Activated naive CD4-positive, alpha-beta T cell treated with anti-CD3 and anti-CD28 coated beads for 36 hours (primary cell): ENCODE measurements at regions of chr10 and their contacts with region 1.

Region 1: GRCh38 chr10:77846718-77847630 is 79.6 kb downstream of the DLG5 start:
- DNase-seq: peak; percentile 76
- H3K4me3 Mint-ChIP-seq: no peak overlapping the region
- H3K27ac Mint-ChIP-seq: no peak overlapping the region
- H3K4me1 Mint-ChIP-seq: peaks cover 3% of the 10 kb centered on the region
- H3K27me3 Mint-ChIP-seq: no peaks in the 10 kb centered on the region

Region 2: GRCh38 chr10:77732213-77733003 is 114.6 kb before region 1 on chr10:
- CTCF ChIA-PET with region 1: no interaction called
- intact Hi-C with region 1: no loop called
- DNase-seq: no peak
- H3K4me3 Mint-ChIP-seq: no peak overlapping the region
- H3K27ac Mint-ChIP-seq: no peak overlapping the region
- H3K4me1 Mint-ChIP-seq: no peaks in the 10 kb centered on the region
- H3K27me3 Mint-ChIP-seq: peaks cover 2% of the 10 kb centered on the region

Region 3: DNA sequence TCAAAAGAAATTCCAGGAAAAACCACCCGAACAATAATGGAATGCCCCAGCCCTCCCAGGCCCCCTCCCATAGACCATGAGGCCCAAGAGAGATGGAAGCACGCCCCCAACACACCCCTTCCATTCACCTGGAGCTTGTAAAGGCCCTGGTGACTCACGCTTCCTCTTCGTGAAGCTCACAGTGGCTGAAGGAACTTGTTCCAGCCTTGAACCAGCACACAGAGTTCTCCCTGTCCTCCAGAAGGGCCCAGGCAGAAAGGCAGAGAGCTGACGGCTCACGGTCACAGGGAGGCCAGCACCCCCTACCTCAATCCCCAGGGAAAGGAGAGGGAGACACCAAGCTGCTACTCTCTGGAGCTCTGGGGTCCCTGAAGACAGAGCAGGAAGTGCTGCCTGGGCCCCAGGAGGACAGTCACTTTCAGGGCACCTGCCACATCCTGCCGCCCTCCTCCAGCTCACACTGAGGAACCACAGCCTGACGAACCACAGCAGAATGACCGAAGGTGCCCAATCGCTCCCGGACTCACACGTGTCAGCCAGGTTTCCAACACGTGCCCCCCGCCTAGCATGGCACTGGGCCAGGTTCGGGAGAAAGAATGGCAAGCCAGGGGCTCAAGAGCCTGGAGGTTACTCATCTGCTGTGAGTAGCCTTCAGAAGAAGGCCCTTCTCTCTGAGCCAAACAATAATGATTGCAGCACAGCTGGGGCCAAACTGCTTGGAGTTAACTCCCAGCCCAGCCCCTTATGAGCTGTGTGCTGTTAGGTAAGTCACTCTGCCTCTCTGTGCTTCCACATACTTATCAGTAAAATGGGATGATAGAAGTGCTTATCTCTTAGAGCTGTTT is 26.8 kb after region 1 on chr10:
- CTCF ChIA-PET with region 1: interaction called, 10 read pairs
- intact Hi-C with region 1: no loop called
- DNase-seq: peak; percentile 72
- H3K4me3 Mint-ChIP-seq: no peak overlapping the region
- H3K27ac Mint-ChIP-seq: no peak overlapping the region
- H3K4me1 Mint-ChIP-seq: peaks cover 11% of the 10 kb centered on the region
- H3K27me3 Mint-ChIP-seq: peaks cover 8% of the 10 kb centered on the region

Region 4: GRCh38 chr10:77926566-77927401 is 79.8 kb after region 1 on chr10 and contains the start of gene DLG5:
- CTCF ChIA-PET with region 1: no interaction called
- intact Hi-C with region 1: loop called (anchors 1 kb)
- DNase-seq: peak; percentile 43
- H3K4me3 Mint-ChIP-seq: peak within 1 kb of the TSS; percentile 52
- H3K27ac Mint-ChIP-seq: no peak within 1 kb of the TSS
- H3K4me1 Mint-ChIP-seq: peaks cover 8% of the 10 kb centered on the region
- H3K27me3 Mint-ChIP-seq: peaks cover 36% of the 10 kb centered on the region
- total RNA-seq, gene DLG5: 2.6 to 3.3 TPM

Region 5: DNA sequence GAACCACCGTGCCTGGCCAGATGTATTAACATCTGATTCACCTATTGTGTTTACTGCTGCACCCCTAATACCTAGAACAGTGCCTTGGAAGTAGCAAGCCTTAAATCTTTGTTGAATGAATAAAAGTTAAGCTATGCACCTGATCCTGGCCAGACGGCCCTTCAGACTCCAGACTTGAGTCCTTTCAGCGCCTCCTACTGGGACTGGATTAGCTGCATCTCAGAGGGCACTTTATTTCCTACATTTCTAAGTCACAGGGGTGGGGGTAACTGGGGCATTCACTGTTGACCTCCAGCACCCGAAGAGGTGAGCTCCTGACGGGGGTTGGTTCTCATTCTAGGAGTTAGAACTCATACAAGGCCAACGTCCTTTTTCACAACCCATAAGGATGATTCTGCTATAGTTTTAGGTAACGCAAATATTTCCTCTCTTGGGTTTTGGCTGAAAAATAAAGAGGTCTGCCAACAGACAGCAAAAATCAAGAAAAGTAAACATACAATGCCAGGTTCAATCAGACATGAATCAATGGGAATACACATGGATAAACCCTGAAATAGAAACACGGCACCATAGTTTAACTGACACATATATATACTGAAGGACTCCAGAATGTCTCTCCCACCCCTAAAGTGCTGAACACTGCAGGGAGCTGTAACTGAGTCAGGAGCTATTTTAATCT is 127.6 kb after region 1 on chr10:
- CTCF ChIA-PET with region 1: interaction called, 4 read pairs
- intact Hi-C with region 1: loop called (anchors 2 kb)
- DNase-seq: peak; percentile 10
- H3K4me3 Mint-ChIP-seq: no peak overlapping the region
- H3K27ac Mint-ChIP-seq: no peak overlapping the region
- H3K4me1 Mint-ChIP-seq: peaks cover 8% of the 10 kb centered on the region
- H3K27me3 Mint-ChIP-seq: no peaks in the 10 kb centered on the region